Activated naive CD8-positive, alpha-beta T cell treated with anti-CD3 and anti-CD28 coated beads, Interleukin-2, amount 10 ng/mL, durations not matched to agents 7 days and 5 days (primary cell): ENCODE measurements at regions of chr1 and their contacts with region 1.

Region 1: DNA sequence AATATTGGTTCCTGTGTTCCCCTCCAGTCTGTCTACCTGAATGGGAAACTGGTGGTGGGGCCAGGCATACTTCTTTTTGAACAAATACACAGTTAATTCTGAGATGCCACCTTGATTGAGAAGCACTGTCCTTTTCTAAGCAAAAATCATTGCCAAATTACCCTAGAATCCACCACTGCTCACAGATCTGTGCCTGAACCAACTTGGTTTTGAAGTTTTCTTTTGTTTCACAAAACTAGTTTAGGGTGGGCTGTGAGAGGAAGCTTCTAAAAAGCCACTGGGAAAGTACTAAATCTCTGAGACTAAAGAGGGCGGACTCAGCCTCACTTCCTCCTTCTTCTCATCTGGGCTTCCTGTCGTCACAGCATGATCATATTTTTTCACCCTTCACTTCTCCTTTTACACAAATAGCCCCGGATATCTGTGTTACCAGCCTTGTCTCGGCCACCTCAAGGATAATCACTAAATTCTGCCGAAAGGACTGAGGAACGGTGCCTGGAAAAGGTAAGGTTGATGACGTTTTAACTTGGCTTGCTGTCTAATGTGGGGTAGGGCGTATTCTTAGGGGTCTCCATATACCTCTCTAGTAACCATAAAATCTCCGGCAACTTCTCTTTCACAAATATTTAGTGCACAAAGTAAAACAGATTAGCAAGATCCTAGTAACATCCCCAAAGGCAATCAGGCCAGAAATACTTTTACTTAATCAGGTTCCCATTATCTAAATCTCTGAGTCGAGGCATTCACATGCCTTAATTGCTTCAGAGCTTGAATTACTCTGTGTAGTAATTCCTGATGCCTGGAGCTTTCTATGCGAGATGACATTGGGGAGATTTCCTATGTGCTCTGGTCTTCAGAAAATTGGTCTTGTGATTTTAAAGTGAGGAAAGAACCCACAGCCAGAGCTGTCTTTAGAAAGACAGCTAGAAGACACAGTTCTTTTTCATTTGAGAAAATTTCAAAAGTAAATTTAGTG is at the start of gene CD53:
- DNase-seq: no peak
- ATAC-seq: peak; percentile 38
- H3K4me3 Mint-ChIP-seq: peak within 1 kb of the TSS; percentile 91
- H3K27ac Mint-ChIP-seq: peak within 1 kb of the TSS; percentile 95
- H3K4me1 Mint-ChIP-seq: peaks cover 39% of the 10 kb centered on the region
- H3K27me3 Mint-ChIP-seq: no peaks in the 10 kb centered on the region
- total RNA-seq, gene CD53: 410 to 415 TPM

Region 2: GRCh38 chr1:110619412-110620249 is 253.4 kb before region 1 on chr1:
- POLR2A ChIA-PET with region 1: interaction called, 10 read pairs
- DNase-seq: peak; percentile 97
- ATAC-seq: peak; percentile 88
- H3K4me3 Mint-ChIP-seq: peak overlapping the region; percentile 86
- H3K27ac Mint-ChIP-seq: peak overlapping the region; percentile 90
- H3K4me1 Mint-ChIP-seq: peaks cover 27% of the 10 kb centered on the region
- H3K27me3 Mint-ChIP-seq: peaks cover 3% of the 10 kb centered on the region

Region 3: DNA sequence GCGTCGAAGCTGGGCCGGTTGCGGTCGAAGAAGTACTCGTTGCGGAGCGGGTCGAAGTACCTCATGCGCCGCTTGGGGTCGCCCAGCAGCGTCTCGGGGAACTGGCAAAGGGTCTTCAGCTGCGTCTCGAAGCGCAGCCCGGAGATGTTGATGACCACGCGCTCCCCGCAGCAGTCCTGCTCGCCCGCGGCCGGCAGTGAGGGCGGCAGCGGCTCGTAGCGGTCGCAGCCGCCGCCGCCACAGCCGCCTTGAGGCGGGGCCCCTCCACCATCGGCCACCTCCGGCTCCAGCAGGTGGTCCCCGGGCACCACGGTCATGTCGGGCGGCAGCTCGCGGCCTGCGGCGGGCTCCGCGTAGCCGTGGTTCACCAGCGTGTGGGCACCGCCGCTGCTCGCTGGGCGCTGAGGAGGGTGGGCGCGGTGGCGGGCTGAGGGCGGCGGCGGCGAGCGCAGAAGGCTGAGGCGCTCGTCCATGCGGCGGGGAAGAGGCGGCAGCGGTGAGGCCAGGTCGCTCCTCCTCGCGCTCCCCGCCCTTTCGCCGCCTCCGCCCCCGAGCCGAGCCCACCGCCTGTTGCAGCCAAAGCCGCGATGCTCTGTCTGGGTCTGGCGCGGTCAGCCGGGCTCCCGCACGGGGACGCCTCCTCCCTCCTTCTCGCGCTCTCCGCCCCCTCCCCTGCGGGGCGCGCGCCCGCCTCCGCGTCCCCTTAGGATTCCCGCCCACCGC is 198.5 kb before region 1 on chr1 and contains the start of gene KCNA3:
- POLR2A ChIA-PET with region 1: interaction called, 16 read pairs
- DNase-seq: peak; percentile 82
- ATAC-seq: peak; percentile 35
- H3K4me3 Mint-ChIP-seq: peak within 1 kb of the TSS; percentile 100
- H3K27ac Mint-ChIP-seq: peak within 1 kb of the TSS; percentile 99
- H3K4me1 Mint-ChIP-seq: peaks cover 31% of the 10 kb centered on the region
- H3K27me3 Mint-ChIP-seq: no peaks in the 10 kb centered on the region
- total RNA-seq, gene KCNA3: 68.4 to 74.0 TPM

Region 4: GRCh38 chr1:110756506-110756905 is 116.5 kb before region 1 on chr1:
- POLR2A ChIA-PET with region 1: no interaction called
- DNase-seq: no peak
- ATAC-seq: no peak
- H3K4me3 Mint-ChIP-seq: no peak overlapping the region
- H3K27ac Mint-ChIP-seq: no peak overlapping the region
- H3K4me1 Mint-ChIP-seq: no peaks in the 10 kb centered on the region
- H3K27me3 Mint-ChIP-seq: peaks cover 30% of the 10 kb centered on the region

Region 5: GRCh38 chr1:110787328-110788071 is 85.5 kb before region 1 on chr1:
- POLR2A ChIA-PET with region 1: interaction called, 90 read pairs
- DNase-seq: peak; percentile 74
- ATAC-seq: peak; percentile 82
- H3K4me3 Mint-ChIP-seq: peak overlapping the region; percentile 80
- H3K27ac Mint-ChIP-seq: peak overlapping the region; percentile 94
- H3K4me1 Mint-ChIP-seq: peaks cover 44% of the 10 kb centered on the region
- H3K27me3 Mint-ChIP-seq: no peaks in the 10 kb centered on the region

Region 6: DNA sequence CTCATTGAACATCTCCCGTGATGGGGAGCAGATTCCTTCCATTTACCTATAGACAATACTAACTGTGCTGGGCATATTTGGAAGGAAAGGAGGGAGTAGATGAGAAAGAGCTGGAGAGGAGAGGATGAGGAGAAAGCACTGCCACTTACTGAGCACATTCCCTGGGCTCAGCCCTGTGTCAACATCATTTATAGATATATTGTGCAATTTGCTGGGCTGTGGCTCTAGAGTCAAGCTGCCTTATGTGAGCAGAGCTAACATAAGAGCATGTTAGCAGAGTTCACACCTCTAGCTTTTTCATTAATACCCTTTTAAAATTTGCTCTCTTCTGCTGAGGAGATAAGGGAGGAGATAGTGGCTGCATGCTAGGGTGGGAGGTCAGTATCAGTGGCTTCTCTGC is 22.4 kb before region 1 on chr1:
- POLR2A ChIA-PET with region 1: no interaction called
- DNase-seq: no peak
- ATAC-seq: no peak
- H3K4me3 Mint-ChIP-seq: no peak overlapping the region
- H3K27ac Mint-ChIP-seq: no peak overlapping the region
- H3K4me1 Mint-ChIP-seq: peaks cover 6% of the 10 kb centered on the region
- H3K27me3 Mint-ChIP-seq: no peaks in the 10 kb centered on the region

Region 7: DNA sequence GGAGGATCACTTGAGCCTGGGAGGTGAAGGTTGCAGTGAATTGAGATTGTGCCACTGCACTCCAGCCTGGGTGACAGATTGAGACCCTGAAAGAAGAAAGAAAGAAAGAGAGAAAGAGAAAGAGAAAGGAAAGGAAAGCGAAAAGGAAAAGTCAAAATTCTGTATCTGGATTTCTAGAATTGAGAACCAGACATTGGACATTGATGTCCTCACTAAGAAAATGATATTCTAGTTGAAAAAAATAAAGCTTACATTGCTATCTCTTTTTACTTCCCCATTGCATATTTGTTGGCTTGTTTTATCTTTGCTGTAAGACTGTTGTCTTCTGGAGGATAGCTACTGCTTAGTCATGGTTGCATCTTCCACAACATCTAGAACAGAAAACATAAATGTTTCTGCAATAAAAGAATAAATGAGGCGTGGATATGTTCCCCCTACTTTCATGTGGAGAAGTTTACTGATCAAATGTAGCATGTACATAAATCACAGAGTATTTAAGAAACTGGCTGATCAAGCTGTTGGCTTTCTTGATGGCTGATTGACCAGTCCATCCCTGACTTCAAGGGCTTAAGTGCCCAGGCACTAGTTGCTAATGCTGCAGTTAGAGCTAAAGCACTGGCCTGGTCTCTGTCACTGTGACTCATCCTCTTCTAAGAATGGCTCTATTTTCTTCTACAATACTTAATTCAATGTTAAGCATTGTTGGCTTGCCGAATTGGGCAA is 17.6 kb after region 1 on chr1:
- POLR2A ChIA-PET with region 1: interaction called, 60 read pairs
- DNase-seq: no peak
- ATAC-seq: no peak
- H3K4me3 Mint-ChIP-seq: no peak overlapping the region
- H3K27ac Mint-ChIP-seq: peak overlapping the region; percentile 52
- H3K4me1 Mint-ChIP-seq: peaks cover 72% of the 10 kb centered on the region
- H3K27me3 Mint-ChIP-seq: no peaks in the 10 kb centered on the region

Region 8: GRCh38 chr1:110963691-110964399 is 90.8 kb after region 1 on chr1 and contains the start of gene LRIF1:
- POLR2A ChIA-PET with region 1: interaction called, 35 read pairs
- DNase-seq: peak; percentile 100
- ATAC-seq: peak; percentile 99
- H3K4me3 Mint-ChIP-seq: peak within 1 kb of the TSS; percentile 97
- H3K27ac Mint-ChIP-seq: peak within 1 kb of the TSS; percentile 99
- H3K4me1 Mint-ChIP-seq: peaks cover 28% of the 10 kb centered on the region
- H3K27me3 Mint-ChIP-seq: peaks cover 11% of the 10 kb centered on the region
- total RNA-seq, gene LRIF1: 25.2 to 26.1 TPM

Region 9: DNA sequence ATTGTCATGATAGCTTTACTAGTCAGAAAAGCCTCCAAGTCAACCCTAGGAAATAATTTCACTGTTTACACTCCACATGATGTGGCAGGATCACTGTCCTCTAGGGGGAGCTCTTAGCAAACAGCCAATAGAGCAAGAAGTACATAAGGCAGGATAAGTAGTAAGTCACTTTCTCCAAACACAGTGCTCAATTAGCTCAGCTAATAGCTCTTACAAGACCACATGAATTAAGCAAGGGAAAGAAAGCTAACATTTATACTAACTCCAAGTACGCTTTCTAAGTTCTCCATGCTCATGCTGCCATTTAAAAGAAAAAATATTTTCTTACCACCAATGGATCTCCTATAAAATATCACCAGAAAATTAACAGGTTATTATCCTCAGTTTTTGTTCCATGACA is 157.6 kb after region 1 on chr1:
- POLR2A ChIA-PET with region 1: no interaction called
- DNase-seq: no peak
- ATAC-seq: peak; percentile 63
- H3K4me3 Mint-ChIP-seq: no peak overlapping the region
- H3K27ac Mint-ChIP-seq: no peak overlapping the region
- H3K4me1 Mint-ChIP-seq: peaks cover 2% of the 10 kb centered on the region
- H3K27me3 Mint-ChIP-seq: peaks cover 9% of the 10 kb centered on the region

Region 10: GRCh38 chr1:111214074-111214801 is 341.2 kb after region 1 on chr1:
- POLR2A ChIA-PET with region 1: interaction called, 18 read pairs
- DNase-seq: peak; percentile 43
- ATAC-seq: peak; percentile 3
- H3K4me3 Mint-ChIP-seq: peak overlapping the region; percentile 84
- H3K27ac Mint-ChIP-seq: peak overlapping the region; percentile 89
- H3K4me1 Mint-ChIP-seq: peaks cover 70% of the 10 kb centered on the region
- H3K27me3 Mint-ChIP-seq: no peaks in the 10 kb centered on the region